Activated CD4-positive, alpha-beta T cell treated with anti-CD3 and anti-CD28 coated beads for 36 hours (primary cell): ENCODE measurements at regions of chr14 and their contacts with region 1.

Region 1: GRCh38 chr14:71138448-71139293 is 231.4 kb downstream of the PCNX1 start:
- DNase-seq: peak; percentile 73
- ATAC-seq: peak; percentile 17
- H3K4me3 Mint-ChIP-seq: no peak overlapping the region
- H3K27ac Mint-ChIP-seq: no peak overlapping the region
- H3K4me1 Mint-ChIP-seq: peaks cover 28% of the 10 kb centered on the region
- H3K27me3 Mint-ChIP-seq: peaks cover 3% of the 10 kb centered on the region

Region 2: GRCh38 chr14:71221119-71221518 is 82.4 kb after region 1 on chr14:
- CTCF ChIA-PET with region 1: no interaction called
- POLR2A ChIA-PET with region 1: no interaction called
- intact Hi-C with region 1: loop called (anchors 1 to 2 kb)
- DNase-seq: no peak
- ATAC-seq: no peak
- H3K4me3 Mint-ChIP-seq: no peak overlapping the region
- H3K27ac Mint-ChIP-seq: no peak overlapping the region
- H3K4me1 Mint-ChIP-seq: peaks cover 15% of the 10 kb centered on the region
- H3K27me3 Mint-ChIP-seq: no peaks in the 10 kb centered on the region

Region 3: GRCh38 chr14:71331403-71331802 is 192.7 kb after region 1 on chr14:
- CTCF ChIA-PET with region 1: no interaction called
- POLR2A ChIA-PET with region 1: no interaction called
- intact Hi-C with region 1: loop called in 1 of 2 experiments (anchors 1 kb)
- DNase-seq: no peak
- ATAC-seq: peak; percentile 17
- H3K4me3 Mint-ChIP-seq: no peak overlapping the region
- H3K27ac Mint-ChIP-seq: peak overlapping the region; percentile 69
- H3K4me1 Mint-ChIP-seq: peaks cover 70% of the 10 kb centered on the region
- H3K27me3 Mint-ChIP-seq: no peaks in the 10 kb centered on the region

Region 4: DNA sequence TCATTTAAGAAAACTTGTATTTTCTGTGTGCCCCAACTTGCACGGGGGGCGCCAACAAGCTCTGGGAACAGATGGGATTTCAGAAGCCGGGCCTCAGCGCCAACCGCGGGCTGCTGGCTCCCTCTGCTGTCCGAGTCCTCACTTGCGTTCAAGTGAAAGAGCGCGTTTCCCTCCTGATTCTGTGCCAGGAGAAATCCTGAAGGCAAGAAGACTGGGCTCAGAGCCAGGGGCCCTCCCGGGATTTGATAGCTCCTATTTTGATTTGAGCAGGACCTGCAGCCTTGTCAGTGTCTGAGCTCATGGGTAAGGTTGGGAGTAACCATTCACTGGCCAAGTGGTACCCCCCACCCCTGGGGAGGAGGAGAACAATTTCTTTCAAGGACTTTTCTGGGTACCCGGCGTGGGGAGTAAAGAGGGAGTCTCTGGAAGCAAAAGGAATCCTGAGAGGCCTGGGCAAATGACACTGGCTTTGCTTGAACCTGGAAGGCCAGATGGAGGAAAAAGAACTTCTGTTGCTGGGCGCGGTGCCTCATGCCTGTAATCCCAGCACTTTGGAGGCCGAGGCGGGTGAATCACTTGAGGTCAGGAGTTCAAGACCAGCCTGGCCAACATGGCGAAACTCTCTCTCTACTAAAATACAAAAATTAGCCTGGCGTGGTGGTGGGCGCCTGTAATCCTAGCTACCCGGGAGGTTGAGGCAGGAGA is 614.6 kb after region 1 on chr14:
- CTCF ChIA-PET with region 1: interaction called, 41 read pairs
- POLR2A ChIA-PET with region 1: no interaction called
- intact Hi-C with region 1: loop called (anchors 1 kb)
- DNase-seq: peak; percentile 84
- ATAC-seq: peak; percentile 51
- H3K4me3 Mint-ChIP-seq: no peak overlapping the region
- H3K27ac Mint-ChIP-seq: no peak overlapping the region
- H3K4me1 Mint-ChIP-seq: peaks cover 3% of the 10 kb centered on the region
- H3K27me3 Mint-ChIP-seq: no peaks in the 10 kb centered on the region